Left cardiac atrium (tissue), 4 donors: ENCODE measurements at regions of chr17 and their contacts with region 1.

Region 1: GRCh38 chr17:7650509-7651096 is at the start of gene ATP1B2:
- DNase-seq: peak; percentile 83
- ATAC-seq: peak; percentile 85 to 87
- total RNA-seq, gene ATP1B2: 1.8 to 3.7 TPM

Region 2: GRCh38 chr17:7818746-7819645 is 168.4 kb after region 1 on chr17:
- intact Hi-C with region 1: loop called in 1 of 2 experiments (anchors 10 kb)
- DNase-seq: no peak
- ATAC-seq: no peak